OCI-LY7 (cell line): ENCODE measurements at regions of chr2 and their contacts with region 1.

Region 1: GRCh38 chr2:141498561-141498960 is 632.3 kb downstream of the LRP1B start:
- DNase-seq: no peak
- H3K4me3 ChIP-seq: no peak overlapping the region
- H3K27ac ChIP-seq: no peak overlapping the region
- H3K4me1 ChIP-seq: no peaks in the 10 kb centered on the region
- CTCF ChIP-seq: no peak

Region 2: DNA sequence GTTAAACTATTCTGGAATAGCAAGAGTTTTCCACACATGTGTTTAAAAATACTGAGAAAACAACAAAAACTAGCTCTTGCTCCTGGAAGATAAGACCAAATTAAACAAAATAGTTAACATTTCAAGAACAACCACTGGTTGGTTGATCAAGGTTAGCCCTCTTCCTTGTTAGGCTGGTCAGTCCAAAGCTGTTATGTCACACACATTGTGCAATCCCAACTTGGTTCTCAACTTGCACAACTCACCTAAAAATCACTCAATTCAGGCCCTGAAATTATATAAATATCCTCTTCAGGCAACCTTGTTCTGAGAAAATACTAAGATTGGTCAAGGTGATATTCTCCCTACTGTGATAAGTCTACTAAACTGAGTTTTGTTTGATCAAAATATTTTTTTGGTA is 802.0 kb after region 1 on chr2:
- CTCF ChIA-PET with region 1: no interaction called
- POLR2A ChIA-PET with region 1: interaction called, 10 read pairs
- intact Hi-C with region 1: no loop called
- DNase-seq: no peak
- H3K4me3 ChIP-seq: no peak overlapping the region
- H3K27ac ChIP-seq: no peak overlapping the region
- H3K4me1 ChIP-seq: no peaks in the 10 kb centered on the region
- CTCF ChIP-seq: no peak

Region 3: GRCh38 chr2:142615876-142616275 is 1117.3 kb after region 1 on chr2:
- CTCF ChIA-PET with region 1: no interaction called
- POLR2A ChIA-PET with region 1: no interaction called
- intact Hi-C with region 1: no loop called
- DNase-seq: no peak
- H3K4me3 ChIP-seq: no peak overlapping the region
- H3K27ac ChIP-seq: no peak overlapping the region
- H3K4me1 ChIP-seq: no peaks in the 10 kb centered on the region
- CTCF ChIP-seq: no peak